Activated T-helper 1 cell treated with anti-CD3 and anti-CD28 coated beads, Interleukin-12 subunit alpha, Interleukin-12 subunit beta, Interleukin-2, Interleukin-4 antibody, amounts not matched to agents 30 ng/mL and 10 ng/mL and 1 ng/mL, durations not matched to agents 14 hours and 24 hours and 36 hours (primary cell): ENCODE measurements at regions of chrX and their contacts with region 1.

Region 1: DNA sequence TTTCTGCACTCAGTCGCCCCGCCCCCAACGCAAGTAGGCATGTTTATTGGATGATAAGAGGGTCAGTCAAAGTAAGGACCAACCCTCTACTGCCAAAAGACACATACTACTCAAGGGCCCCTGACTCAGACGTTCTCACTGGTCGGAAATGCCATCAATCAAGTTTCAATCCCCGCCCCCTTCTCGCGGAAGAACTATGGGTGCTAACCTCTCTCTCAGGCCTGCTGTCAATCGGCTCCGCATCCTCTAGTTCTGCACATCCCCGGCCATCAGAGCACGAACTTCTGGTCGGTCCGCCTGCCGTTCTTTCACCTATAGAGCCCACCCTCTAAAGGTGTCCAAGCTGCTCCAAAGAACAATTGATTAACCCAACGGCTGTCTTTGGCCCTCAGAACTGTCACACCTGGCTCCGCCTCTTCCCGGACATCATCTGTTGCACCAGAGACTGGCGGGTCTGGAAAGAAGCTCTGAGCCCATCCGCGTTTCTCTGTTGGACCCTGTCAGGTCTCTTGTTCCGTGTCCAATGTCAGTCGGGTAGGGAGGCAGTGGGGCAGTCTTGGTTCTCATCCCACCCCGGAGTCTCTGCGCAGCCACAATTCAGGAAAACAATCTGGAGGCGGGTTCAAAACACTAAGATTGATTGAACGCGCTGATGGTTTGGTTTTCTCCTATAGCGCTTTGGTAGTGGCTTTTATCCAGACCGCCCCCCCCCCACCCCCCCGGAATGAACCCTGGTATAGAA is 15.2 kb downstream of the NDUFB11 start:
- DNase-seq: peak; percentile 86
- H3K4me3 Mint-ChIP-seq: peak overlapping the region; percentile 97
- H3K27ac Mint-ChIP-seq: peak overlapping the region; percentile 98
- H3K4me1 Mint-ChIP-seq: no peaks in the 10 kb centered on the region
- H3K27me3 Mint-ChIP-seq: no peaks in the 10 kb centered on the region

Region 2: DNA sequence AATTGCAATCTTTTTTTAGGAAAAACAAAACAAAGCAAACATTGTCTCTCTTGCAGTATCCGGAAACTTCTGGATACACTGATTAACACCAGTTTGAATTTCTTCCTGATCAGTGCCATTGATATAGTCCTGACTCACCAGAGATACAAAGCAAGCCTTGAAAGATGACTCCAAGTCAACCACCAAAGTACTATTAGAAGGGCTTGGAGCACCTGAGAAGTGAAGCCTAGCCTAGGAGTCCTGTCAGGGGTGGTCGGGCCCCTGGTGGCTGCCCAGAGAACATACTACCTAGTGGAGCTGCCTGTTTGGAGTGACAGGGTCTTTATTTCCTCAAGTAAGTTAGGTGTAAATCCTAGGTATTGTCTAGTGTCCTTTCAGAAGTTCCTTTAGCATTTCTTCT is 1177.3 kb before region 1 on chrX:
- intact Hi-C with region 1: no loop called
- DNase-seq: no peak
- H3K4me3 Mint-ChIP-seq: no peak overlapping the region
- H3K27ac Mint-ChIP-seq: no peak overlapping the region
- H3K4me1 Mint-ChIP-seq: no peaks in the 10 kb centered on the region
- H3K27me3 Mint-ChIP-seq: no peaks in the 10 kb centered on the region

Region 3: DNA sequence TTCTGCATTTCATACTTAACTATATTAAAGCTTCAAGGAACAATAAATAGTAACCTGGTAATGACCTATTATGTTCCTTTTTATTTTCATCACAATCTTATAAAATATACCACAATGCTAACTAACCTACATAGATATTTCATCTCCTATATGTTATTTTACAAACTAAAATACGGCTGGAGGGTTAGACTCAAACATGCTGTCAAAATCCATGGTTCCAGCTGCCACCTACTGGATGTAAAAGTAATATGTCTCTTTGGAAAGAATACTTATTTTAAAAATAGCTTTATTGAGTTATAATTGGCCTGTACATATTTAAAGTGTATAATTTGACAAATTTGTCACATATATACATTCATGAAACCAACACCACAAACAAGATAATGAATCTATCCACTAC is 36.1 kb before region 1 on chrX:
- intact Hi-C with region 1: loop called (anchors 1 kb)
- DNase-seq: no peak
- H3K4me3 Mint-ChIP-seq: no peak overlapping the region
- H3K27ac Mint-ChIP-seq: no peak overlapping the region
- H3K4me1 Mint-ChIP-seq: no peaks in the 10 kb centered on the region
- H3K27me3 Mint-ChIP-seq: peaks cover 2% of the 10 kb centered on the region